Stomach (tissue), 19 donors: ENCODE measurements at regions of chr1 and their contacts with region 1.

Region 1: GRCh38 chr1:223081181-223081994 is 61.7 kb downstream of the TLR5 start:
- DNase-seq: peak; percentile 86 to 96
- H3K4me3 ChIP-seq: peak overlapping the region; percentile 23 to 40 (median 36)
- H3K27ac ChIP-seq: peak overlapping the region; percentile 45 to 82 (median 63)
- H3K4me1 ChIP-seq: peaks cover 0 to 31% (median 6%) of the 10 kb centered on the region in 4 donors
- H3K27me3 ChIP-seq: no peaks in the 10 kb centered on the region
- CTCF ChIP-seq: peak in 5 of 7 experiments; percentile 93 to 96 (median 95)
- EP300 ChIP-seq: no peak
- POLR2A ChIP-seq: no peak

Region 2: DNA sequence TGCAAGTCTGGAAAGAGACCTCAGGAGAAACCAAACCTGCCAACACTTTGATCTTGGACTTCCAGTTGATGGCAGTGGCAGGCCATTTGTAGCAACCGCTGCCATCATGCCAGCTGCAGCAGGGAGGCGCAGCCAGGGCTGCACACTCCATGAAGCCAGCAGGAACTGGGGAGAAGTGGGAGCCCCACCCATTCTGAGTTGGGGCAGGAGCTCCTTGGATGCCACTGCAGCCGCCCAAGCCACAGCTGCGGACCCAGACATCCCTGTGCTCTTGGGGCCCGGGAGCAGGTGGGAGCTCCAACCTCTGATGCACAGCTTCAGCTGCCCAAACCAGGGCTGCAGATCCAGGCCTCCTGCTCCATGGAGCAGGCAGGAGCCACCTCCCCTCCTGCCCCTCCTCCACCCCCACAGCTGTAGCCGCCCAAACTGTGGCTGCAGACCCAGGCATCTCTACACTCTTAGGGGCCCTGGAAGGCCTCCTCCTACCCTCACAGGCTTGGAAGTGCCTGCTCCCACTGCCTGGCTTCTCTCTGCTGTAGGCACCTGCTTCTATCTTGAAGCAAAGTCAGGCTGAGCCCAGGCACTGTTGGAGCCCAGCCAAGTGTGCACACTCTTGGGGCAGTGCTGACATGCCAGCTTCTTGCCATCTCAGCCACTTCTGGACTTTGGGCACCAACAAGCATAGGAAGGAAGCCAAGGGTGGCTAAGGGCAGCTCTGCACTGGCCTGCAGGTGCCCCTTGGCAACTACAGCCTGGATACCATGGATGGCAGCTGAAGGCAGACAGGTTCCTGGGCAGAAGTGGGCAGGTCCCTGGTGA is 286.5 kb before region 1 on chr1:
- intact Hi-C with region 1: loop called (anchors 5 kb)
- DNase-seq: peak in 1 of 2 donors; percentile 45
- H3K4me3 ChIP-seq: no peak overlapping the region
- H3K27ac ChIP-seq: no peak overlapping the region
- H3K4me1 ChIP-seq: peaks cover 9 to 31% (median 9%) of the 10 kb centered on the region in 4 donors
- H3K27me3 ChIP-seq: no peaks in the 10 kb centered on the region
- CTCF ChIP-seq: no peak
- EP300 ChIP-seq: no peak
- POLR2A ChIP-seq: no peak

Region 3: DNA sequence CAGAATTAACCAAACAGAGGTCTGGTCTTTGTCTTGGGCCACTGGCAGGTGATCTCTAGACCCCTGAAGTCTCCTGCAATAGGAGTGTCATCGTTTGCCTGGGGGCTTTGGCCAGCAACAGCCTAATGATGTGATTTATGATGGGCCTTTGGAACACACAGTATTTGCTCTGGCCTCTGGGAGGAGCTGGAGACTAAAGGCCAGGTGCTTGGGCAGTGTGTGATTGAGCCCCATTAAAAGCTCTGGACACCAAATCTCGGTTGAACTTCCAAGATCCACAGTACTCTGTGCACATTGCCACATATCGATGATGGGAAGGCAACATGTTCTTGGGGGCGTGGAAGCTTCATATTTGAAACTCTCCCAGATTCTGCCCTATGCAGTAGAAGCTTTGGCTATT is 93.6 kb after region 1 on chr1:
- intact Hi-C with region 1: no loop called
- DNase-seq: peak in 1 of 2 donors; percentile 42
- H3K4me3 ChIP-seq: no peak overlapping the region
- H3K27ac ChIP-seq: peak overlapping the region in 2 of 5 donors; percentile 29 to 55
- H3K4me1 ChIP-seq: peaks cover 2 to 24% (median 8%) of the 10 kb centered on the region in 4 donors
- H3K27me3 ChIP-seq: no peaks in the 10 kb centered on the region
- CTCF ChIP-seq: peak in 1 of 7 experiments; percentile 15
- EP300 ChIP-seq: no peak
- POLR2A ChIP-seq: no peak